Kidney (tissue), 22 donors: ENCODE measurements at regions of chr9 and their contacts with region 1.

Region 1: DNA sequence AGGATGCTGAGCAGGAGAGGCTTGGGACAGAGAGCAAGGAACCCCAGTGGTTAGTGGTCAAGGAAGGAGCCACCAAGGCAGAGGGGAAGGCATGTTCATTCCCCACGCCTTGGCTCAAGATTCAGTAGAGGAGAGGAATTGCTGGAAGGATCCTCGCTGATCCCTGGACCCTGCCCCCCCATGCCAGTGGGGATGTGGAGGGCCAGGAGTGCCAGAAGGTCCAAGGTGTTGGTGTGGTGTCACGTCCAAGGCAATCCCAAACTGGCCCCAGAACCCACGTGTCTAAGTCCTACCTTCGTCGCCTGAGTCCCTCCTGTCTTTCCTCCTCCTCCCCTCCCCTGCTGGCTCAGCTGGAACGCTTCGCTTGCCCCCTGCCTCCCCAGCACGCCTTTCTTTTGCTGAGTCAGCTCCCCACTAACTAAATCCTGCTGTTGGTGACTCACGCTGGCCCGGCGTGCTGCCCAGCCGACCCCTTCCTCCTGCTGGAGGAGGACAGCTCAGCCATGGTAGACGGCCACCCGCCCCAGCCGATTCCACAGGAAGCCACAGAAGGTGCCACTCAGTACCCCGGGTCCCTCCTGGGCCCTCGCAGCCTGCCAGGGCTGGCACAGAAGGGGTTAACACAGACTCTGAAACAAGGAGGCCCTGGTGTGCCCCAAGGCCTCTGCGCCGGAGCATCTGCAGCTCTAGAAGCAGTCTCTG is 37.6 kb upstream of the ORM1 start:
- DNase-seq: peak; percentile 73 to 92 (median 81)
- H3K4me3 ChIP-seq: no peak overlapping the region
- H3K27ac ChIP-seq: peak overlapping the region in 1 of 2 donors; percentile 17
- H3K4me1 ChIP-seq: peaks cover 0 to 10% (median 7%) of the 10 kb centered on the region in 3 donors
- H3K27me3 ChIP-seq: no peaks in the 10 kb centered on the region
- CTCF ChIP-seq: peak; percentile 2

Region 2: GRCh38 chr9:114108016-114108833 is 177.1 kb before region 1 on chr9:
- intact Hi-C with region 1: no loop called
- DNase-seq: peak; percentile 88 to 93 (median 90)
- H3K4me3 ChIP-seq: no peak overlapping the region
- H3K27ac ChIP-seq: no peak overlapping the region
- H3K4me1 ChIP-seq: no peaks in the 10 kb centered on the region
- H3K27me3 ChIP-seq: no peaks in the 10 kb centered on the region
- CTCF ChIP-seq: peak; percentile 94

Region 3: GRCh38 chr9:114155263-114155972 is 129.9 kb before region 1 on chr9 and contains the start of gene COL27A1:
- intact Hi-C with region 1: loop called (anchors 5 kb)
- DNase-seq: peak; percentile 90 to 96 (median 93)
- H3K4me3 ChIP-seq: peak within 1 kb of the TSS; percentile 49 to 72 (median 58)
- H3K27ac ChIP-seq: peak within 1 kb of the TSS; percentile 38 to 65
- H3K4me1 ChIP-seq: peaks cover 0 to 18% (median 8%) of the 10 kb centered on the region in 3 donors
- H3K27me3 ChIP-seq: no peaks in the 10 kb centered on the region
- CTCF ChIP-seq: peak; percentile 96
- total RNA-seq, gene COL27A1: 45.6 TPM

Region 4: DNA sequence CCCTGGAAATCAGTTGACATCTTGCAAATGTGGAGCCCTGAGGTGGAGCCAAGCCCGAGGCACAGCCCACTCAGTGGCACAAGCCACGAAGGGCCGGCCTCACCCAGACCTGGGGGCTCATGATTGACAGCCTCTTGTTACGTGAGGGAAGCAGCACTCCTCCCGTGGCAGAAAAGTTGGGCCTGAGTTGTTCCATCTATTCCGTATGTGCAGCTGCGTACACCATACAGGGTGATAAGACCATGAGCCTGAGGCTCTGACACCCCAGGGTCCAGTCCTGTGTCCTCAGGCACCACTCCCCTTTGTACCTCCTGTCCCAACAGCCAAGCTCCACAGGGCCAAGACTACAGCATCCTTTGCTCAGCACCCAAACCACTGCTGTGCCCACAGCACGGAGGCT is 42.4 kb after region 1 on chr9:
- intact Hi-C with region 1: no loop called
- DNase-seq: no peak
- H3K4me3 ChIP-seq: no peak overlapping the region
- H3K27ac ChIP-seq: no peak overlapping the region
- H3K4me1 ChIP-seq: no peaks in the 10 kb centered on the region
- H3K27me3 ChIP-seq: no peaks in the 10 kb centered on the region
- CTCF ChIP-seq: no peak